AG04449 (cell line): ENCODE measurements at regions of chr4 and their contacts with region 1.

Region 1: DNA sequence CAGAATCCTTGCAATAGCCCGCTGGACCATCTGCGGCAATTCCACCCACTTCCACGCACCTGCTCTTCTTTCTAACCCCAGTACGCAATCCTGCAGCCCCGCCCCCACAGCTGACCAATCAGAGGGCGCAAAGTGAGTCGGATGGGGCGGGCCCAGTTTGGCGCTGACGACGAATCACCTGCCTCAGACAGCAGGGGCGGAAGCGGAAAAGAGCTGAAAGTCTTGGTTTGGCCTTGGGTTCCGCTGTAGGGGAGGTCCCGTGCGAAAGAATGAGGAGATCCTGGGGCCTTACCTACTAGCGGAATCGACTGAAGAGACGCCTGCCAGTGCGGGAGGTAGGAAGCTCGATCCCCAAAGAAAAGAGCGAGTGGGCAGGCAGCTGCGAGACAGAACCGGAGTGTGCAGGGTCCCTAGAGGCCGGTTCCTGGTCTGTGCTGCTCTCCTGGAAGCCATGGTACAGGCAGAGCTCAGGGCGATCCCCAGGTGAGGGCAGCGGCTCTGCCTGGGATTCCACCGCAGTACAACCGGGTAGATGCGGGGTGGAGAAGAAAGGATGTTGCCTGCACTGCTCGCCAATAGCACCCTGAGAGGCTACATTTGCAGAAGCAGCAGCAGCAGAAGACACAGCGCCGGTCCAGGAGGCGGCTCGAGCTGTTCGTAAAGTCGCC is at the start of gene TMEM184C:
- DNase-seq: peak; percentile 53
- H3K4me3 ChIP-seq: peak within 1 kb of the TSS; percentile 91
- CTCF ChIP-seq: peak; percentile 10

Region 2: GRCh38 chr4:147633113-147633512 is 15.8 kb after region 1 on chr4:
- CTCF ChIA-PET with region 1: interaction called, 10 read pairs
- POLR2A ChIA-PET with region 1: no interaction called
- DNase-seq: no peak
- H3K4me3 ChIP-seq: no peak overlapping the region
- CTCF ChIP-seq: no peak

Region 3: GRCh38 chr4:147683717-147684700 is 66.7 kb after region 1 on chr4 and contains the start of gene PRMT9:
- CTCF ChIA-PET with region 1: no interaction called
- POLR2A ChIA-PET with region 1: interaction called, 12 read pairs
- DNase-seq: peak; percentile 63
- H3K4me3 ChIP-seq: peak within 1 kb of the TSS; percentile 88
- CTCF ChIP-seq: no peak